Cardiac septum (tissue), 1 donor: ENCODE measurements at regions of chr18 and their contacts with region 1.

Region 1: DNA sequence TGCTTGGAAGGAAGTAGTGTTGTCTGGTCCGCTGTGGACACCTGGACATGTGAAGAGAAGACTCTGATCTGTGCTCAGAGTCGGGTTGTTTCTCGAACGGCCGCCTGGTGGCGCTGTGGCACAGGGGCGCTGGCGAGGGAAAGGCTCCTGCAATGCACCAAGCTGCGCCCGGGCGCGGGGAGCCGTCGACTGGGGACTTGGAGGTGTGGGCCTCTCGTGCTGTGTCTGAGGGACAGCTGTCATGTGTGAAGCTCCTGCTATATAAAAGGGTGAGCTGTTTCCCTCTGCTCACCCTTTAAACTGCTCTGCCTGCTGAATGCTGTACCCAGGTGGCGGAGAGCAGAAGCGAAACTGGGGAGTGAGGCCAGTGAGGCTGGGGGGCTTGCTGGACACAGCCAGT is 44.0 kb downstream of the GNAL start:
- DNase-seq: peak; percentile 92

Region 2: DNA sequence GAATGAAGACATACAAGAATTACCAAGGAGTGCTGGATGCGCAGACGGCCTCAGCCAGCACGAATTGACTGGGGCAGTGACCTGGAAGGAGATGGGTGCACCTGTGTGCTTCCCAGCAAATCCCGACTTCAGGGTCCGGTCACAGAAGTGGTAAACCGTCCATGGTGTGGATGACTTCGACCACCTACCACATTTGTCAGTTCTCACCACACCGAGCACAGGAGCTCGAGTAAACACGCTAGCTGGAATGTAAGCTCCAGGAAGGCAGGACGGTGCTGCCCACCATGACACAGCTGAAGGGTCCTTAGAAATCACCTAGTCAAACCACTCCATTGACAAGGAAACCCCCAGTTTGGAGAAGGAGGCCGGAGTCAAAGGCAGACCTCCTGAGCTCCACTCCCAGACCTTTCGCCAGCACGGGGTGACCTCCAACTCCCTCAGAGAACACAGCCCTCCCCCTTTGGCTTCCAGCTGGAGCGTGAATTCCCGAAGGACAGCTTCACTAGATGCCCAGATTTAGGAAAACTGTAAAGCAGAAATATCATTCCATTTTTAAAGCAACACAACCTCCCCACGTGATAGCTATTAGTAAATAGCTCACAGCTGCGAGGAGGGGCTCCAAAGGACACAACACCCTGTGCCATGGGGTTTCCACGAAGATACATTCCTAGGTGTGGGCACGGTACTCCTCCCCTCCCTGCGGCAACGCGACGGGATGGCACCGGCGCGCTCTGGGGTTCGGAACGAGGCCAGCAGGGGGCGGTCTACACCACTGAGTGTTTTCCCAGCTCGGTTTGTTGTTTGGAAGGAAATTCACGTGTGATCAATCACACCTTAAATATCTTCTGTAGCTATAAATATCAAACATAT is 78.1 kb before region 1 on chr18:
- intact Hi-C with region 1: loop called (anchors 5 kb)
- DNase-seq: no peak

Region 3: GRCh38 chr18:11669271-11669947 is 63.6 kb before region 1 on chr18:
- intact Hi-C with region 1: no loop called
- DNase-seq: no peak

Region 4: DNA sequence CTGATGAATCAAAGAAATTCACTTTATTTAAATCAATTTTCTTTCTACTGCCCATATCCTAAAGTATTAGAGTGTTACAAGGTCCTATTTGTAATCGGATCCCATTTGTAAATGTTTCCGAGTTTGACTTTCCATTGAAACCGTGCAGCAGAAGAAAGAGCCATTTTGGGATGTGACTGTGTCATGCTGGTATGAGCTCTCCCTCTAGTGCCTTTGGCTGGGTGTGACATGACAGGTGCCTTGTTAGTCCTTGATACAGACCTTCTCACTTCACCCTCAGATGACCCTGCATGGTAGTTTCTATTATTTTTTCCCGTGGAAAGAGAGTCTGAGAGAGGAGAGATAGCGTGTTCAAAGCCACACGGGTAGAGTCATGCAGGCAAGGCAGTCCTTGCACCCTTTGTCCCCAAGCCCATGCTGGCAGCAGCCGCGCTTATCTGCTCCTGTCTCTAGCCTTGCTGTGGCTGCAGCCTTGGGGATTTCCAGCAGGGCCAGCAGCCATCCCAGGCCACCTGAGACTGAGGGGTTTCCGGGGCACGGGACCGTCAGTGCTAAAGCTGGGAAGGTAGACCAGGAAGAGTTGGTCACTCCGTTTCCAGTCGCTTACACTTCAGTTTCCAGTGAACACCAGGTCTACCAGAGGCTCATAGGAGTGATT is 139.6 kb after region 1 on chr18:
- intact Hi-C with region 1: loop called (anchors 2 kb)
- DNase-seq: no peak

Region 5: DNA sequence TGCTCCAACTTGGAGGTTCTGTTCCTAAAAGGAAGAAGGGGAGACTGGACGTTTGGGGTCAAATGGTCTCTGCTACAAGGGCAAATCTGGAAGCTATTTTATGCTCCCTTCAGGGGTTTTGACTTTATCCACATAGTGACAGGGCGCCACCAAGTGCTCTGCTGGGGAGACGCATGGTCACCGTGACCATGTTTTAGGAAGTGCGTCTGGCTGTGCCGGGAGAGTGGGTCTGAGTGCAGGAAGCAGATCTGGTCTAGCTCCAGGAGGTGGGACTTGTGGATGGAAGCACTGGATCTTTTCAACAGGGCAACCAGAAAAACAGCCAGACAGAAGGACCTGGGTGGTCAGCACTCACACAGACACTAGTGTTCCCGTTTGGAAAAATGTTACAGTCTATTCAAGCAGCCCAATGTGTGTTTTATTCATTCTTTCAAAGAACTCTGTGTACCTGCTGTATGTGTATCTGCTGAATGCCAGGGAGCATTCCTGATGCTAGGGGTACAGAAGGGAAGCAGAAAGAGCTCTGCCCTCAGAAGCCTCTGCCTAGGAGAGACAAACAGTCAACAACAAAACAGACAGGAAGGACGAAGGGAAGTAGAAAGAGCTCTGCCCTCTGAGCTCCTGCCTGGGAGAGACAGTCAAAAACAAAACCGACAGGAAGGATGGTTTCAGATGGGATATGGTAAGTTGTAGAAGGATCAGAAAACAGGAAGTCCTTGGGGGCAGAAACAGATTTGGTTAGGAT is 262.6 kb after region 1 on chr18:
- intact Hi-C with region 1: loop called (anchors 5 kb)
- DNase-seq: peak; percentile 90

Region 6: DNA sequence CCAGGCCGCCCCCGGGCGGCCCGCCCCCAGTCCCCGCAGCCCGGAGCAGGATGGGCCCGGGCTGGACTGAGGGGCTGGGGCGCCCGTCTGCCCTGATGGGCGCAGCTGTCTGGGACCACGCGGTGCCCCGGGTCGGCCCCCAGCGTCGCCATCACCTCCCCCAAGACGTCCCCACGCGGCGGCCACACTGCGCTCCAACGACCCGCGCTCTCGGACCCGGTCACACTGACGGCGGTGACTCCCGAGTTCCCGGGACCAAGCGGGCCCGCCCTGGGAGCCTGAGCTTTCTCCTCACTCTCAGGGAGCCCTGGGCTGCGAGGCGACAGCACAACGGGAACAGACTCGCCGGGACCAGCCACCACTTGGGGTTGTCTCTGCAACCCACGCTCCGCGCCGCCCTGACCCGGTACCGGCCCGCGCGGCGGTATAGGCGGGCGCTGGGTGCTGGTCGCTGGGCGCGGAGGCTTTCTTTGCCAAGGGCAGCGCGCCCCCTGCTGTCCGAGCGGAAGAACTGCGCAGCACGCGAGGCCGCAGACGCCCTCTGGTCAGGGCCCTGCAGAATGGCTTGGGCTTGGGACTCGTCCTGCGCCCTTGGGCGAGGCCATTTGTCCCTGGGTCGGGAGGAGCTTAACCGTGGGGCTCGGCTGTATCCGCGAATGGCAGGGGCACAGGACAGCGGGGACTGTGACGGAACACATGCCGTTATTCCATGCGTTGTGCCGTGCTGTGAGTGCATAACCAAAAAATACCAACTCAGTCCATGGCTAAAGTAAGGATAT is 305.8 kb after region 1 on chr18:
- intact Hi-C with region 1: loop called (anchors 5 kb)
- DNase-seq: peak; percentile 94